ENCODE measurements at regions of chr17 and their contacts with region 1.

Region 1: GRCh38 chr17:43846221-43846712 is 709 bp upstream of the CD300LG start:
- DNase-seq: peak; percentile 71 to 88 (median 80)
- H3K4me3 ChIP-seq: peak overlapping the region in 1 of 59 donors; percentile 19
- H3K27ac ChIP-seq: peak overlapping the region in 1 of 59 donors; percentile 5
- H3K27me3 ChIP-seq: peaks cover 0 to 2% (median 0%) of the 10 kb centered on the region in 45 donors
- CTCF ChIP-seq: peak; percentile 81 to 99 (median 96)

Region 2: DNA sequence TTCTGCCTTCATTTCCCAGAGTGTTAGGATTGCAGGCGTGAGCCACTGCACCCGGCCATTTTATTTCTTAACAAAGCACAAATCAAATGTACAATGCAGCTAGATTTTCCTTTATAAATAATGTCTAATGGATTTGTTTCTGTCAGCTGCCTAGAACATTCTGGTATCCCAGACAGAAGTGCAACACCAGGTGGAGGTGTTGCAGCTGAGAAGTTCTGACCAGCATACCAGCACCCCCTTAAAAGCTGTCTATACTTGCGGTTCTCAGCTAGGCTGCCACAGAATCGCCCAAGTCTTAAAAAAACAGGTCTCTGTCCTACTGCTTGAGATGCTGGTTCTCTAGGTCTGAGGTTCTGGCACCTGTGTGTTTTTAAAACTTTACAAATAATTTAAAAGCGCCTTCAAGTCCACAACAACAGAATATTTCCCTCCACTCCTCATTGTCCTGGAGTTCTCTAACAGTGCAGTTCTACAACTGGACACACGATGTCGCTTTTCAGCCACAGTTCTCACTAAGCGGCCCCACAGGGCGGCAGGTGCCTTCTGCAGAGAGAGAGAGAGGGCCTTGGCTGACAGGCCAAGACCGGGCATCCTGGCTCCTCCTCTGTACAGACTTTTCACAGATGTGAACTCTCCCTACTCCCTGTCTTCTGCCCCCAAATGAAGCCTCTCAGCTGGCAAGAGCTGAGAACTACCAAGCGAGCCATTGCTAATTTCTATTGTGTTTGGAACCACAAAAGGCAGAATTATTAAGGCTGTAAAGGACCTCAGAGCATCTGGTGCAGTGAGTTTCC is 152.0 kb before region 1 on chr17:
- intact Hi-C with region 1: loop called (anchors 2 to 10 kb)
- DNase-seq: peak; percentile 44 to 79 (median 72)
- H3K4me3 ChIP-seq: no peak overlapping the region
- H3K27ac ChIP-seq: no peak overlapping the region
- H3K27me3 ChIP-seq: no peaks in the 10 kb centered on the region
- CTCF ChIP-seq: peak; percentile 77 to 100 (median 97)

Region 3: GRCh38 chr17:43760254-43760852 is 85.9 kb before region 1 on chr17:
- intact Hi-C with region 1: loop called in 1 of 2 experiments (anchors 10 kb)
- DNase-seq: peak; percentile 89 to 97 (median 92)
- H3K4me3 ChIP-seq: no peak overlapping the region
- H3K27ac ChIP-seq: peak overlapping the region in 1 of 59 donors; percentile 53
- H3K27me3 ChIP-seq: peaks cover 0 to 20% (median 9%) of the 10 kb centered on the region in 45 donors
- CTCF ChIP-seq: peak; percentile 88 to 100 (median 99)

Region 4: DNA sequence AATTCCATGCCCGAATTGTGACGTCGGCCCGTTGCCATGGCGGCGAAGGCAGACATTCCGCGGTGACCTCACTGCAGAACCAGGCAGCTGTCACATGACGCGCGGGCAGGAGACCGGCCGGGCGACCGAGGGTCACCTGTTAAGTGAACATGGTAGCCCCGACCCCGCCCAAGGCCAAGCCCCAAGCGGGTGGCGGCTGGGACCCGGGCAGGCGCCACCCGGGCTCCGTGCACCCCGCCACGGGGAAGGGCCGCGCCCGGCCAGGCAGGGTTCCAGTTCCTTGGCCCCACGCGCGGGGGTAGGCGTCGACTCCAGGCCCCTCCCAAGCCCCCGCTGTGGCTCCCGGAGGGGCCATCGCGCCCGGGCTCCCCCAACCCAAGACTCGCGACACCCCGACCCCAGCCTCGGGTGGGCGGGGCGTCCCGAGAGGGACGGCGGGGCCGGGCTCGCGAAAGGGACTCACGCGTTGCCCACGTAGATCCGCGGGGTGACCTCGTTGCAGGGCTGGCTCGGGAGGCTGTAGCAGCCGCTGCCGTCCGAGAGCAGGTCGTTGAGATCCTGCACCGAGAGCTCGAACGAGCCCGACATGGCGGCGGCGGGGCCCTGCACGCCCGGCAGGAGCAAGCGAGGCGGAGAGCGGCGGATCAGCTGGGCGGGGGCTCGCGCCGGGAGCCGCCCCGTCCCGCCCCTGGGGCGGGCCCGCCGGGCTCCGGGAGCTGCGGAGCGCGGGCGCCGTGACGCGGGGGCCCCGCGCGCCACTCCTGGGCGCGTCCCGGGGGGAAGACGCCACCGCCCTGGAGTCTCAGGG is 67.7 kb before region 1 on chr17 and contains the start of gene DUSP3:
- intact Hi-C with region 1: loop called in 1 of 2 experiments (anchors 5 kb)
- DNase-seq: peak; percentile 89 to 97 (median 94)
- H3K4me3 ChIP-seq: peak within 1 kb of the TSS; percentile 79 to 100 (median 97)
- H3K27ac ChIP-seq: peak within 1 kb of the TSS; percentile 86 to 100 (median 99)
- H3K27me3 ChIP-seq: no peaks in the 10 kb centered on the region
- CTCF ChIP-seq: peak in 7 of 56 donors; percentile 4 to 42 (median 17)
- total RNA-seq, gene DUSP3: 65.6 to 156 (median 103) TPM

Region 5: GRCh38 chr17:43791589-43791988 is 54.7 kb before region 1 on chr17:
- intact Hi-C with region 1: loop called in 1 of 2 experiments (anchors 5 kb)
- DNase-seq: no peak
- H3K4me3 ChIP-seq: peak overlapping the region in 2 of 59 donors; percentile 0 to 9
- H3K27ac ChIP-seq: no peak overlapping the region
- H3K27me3 ChIP-seq: no peaks in the 10 kb centered on the region
- CTCF ChIP-seq: no peak

Region 6: DNA sequence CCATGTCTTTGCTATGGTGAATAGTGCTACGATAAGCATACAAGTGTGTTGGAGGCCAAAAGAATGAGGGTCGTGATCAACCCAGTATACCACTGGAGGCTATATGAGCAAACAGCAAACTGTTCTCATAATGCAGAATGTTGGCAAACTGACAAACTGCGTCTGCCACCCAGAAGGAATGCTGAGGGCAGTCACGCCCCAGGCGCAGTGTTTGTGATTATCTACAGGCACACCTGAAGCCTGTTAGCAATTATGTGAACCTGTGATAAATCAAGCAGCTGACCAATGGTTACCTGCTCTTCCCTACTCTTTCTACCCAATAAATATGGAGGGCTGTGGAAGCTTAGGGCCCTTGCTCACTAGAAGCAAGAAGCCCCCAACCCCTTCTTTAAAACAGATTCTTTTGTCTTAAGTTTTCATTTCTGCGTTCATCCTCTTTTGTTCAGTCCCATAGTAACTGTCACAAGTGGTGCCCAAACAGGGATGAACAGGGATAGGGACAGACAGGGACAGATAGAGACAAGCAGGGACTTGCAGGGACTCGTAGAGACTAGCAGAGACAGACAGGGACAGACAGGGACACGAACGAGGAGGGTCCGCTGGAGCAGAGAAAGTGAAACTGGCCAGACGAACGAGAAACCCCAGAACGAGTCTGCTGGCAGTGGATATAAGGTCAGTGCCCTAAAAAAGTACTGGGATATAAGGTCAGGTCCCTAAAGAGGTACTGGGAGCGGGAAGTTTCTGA is 25.9 kb after region 1 on chr17:
- intact Hi-C with region 1: no loop called
- DNase-seq: no peak
- H3K4me3 ChIP-seq: peak overlapping the region in 23 of 59 donors; percentile 2 to 45 (median 26)
- H3K27ac ChIP-seq: peak overlapping the region in 1 of 59 donors; percentile 14
- H3K27me3 ChIP-seq: no peaks in the 10 kb centered on the region
- CTCF ChIP-seq: no peak

Measured in dorsolateral prefrontal cortex (tissue), 120 donors.